Activated CD4-positive, alpha-beta memory T cell treated with anti-CD3 and anti-CD28 coated beads, Interleukin-2, amount 10 ng/mL, durations not matched to agents 7 days and 5 days (primary cell): ENCODE measurements at regions of chr16 and their contacts with region 1.

Region 1: DNA sequence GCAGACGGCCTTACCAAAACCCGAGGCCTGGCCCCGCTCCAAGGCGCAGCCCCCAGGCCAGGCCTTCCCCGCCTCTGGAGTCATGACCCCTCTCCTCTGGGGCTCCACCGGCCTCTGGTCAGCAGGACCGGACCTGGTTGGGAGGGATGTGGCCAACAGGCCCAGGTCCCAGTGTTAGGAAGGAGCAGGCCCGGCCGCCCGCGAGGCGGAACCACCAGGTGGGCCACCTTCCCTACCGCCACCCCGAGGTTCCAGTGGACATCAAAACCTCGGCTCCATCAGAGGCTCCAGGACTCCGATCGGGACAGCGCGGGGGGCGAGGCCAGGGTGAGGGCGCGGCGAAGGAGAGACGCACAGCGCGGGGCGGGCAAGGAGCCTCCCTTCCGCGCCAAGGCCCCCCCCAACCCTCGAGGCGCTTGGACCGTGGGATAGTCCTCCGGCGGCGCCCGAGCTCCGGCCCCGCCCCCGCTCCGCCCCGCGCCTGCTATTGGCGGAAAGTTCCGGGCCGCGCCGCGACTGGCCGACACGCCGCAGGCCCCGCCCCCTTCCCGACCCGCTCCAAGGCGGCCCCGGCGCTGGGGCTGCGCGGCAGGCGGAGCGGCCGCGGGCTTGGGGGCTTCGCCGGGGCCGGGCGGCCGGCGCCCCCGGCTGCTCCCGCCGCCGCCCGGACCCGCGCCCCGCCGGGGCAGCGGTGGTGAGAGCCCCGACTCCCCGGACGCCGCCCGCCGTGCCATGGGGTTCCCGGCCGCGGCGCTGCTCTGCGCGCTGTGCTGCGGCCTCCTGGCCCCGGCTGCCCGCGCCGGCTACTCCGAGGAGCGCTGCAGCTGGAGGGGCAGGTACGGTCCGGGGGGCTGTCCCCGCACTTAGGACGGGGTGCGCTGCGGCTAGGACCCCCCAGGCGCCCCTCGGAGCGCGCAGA is at the start of gene METRN:
- DNase-seq: peak; percentile 89
- H3K4me3 Mint-ChIP-seq: peak within 1 kb of the TSS; percentile 43
- H3K27ac Mint-ChIP-seq: no peak within 1 kb of the TSS
- H3K4me1 Mint-ChIP-seq: peaks cover 11% of the 10 kb centered on the region
- H3K27me3 Mint-ChIP-seq: peaks cover 17% of the 10 kb centered on the region
- total RNA-seq, gene METRN: 4.4 to 6.2 TPM

Region 2: DNA sequence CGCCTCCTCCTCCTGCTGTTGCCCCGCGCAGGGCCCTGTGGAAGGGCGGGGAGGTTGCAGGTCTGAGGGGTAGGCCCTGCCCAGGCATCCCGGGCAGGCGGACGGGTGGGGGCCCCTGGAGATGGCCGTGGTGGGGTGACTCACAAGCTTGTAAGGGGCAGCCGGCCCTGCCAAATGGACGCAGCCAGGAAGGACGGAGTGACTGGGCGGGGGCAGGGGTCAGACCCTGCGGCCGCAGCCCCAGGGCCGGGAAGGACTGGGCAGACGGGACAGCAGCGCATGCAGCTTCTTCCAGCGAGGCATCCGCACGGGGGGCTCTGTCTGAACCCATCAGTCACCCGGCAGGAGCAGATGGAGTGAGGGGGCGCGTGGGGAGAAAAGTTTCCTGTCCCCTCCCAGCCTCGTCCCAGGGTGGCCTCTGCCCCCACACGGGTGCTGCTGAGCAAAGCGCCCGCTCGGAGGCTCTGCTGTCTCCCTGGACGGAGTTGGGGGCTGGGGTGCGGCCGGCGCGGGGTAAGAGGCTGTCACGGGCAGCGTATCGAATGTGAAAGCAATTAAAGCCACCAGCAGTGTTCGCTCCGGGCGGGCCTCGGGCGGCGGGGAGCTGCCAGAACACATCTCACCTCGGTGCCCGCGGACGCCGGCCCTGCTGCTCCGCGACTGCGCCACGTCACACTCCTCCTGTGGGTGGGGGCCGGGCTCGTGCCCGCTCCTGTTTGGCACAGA is 160.0 kb before region 1 on chr16:
- CTCF ChIA-PET with region 1: no interaction called
- POLR2A ChIA-PET with region 1: no interaction called
- DNase-seq: no peak
- H3K4me3 Mint-ChIP-seq: no peak overlapping the region
- H3K27ac Mint-ChIP-seq: no peak overlapping the region
- H3K4me1 Mint-ChIP-seq: no peaks in the 10 kb centered on the region
- H3K27me3 Mint-ChIP-seq: peaks cover 6% of the 10 kb centered on the region

Region 3: GRCh38 chr16:695355-696089 is 19.3 kb before region 1 on chr16:
- CTCF ChIA-PET with region 1: interaction called, 10 read pairs
- POLR2A ChIA-PET with region 1: interaction called, 19 read pairs
- DNase-seq: peak; percentile 81
- H3K4me3 Mint-ChIP-seq: peak overlapping the region; percentile 79
- H3K27ac Mint-ChIP-seq: peak overlapping the region; percentile 92
- H3K4me1 Mint-ChIP-seq: peaks cover 57% of the 10 kb centered on the region
- H3K27me3 Mint-ChIP-seq: peaks cover 8% of the 10 kb centered on the region

Region 4: DNA sequence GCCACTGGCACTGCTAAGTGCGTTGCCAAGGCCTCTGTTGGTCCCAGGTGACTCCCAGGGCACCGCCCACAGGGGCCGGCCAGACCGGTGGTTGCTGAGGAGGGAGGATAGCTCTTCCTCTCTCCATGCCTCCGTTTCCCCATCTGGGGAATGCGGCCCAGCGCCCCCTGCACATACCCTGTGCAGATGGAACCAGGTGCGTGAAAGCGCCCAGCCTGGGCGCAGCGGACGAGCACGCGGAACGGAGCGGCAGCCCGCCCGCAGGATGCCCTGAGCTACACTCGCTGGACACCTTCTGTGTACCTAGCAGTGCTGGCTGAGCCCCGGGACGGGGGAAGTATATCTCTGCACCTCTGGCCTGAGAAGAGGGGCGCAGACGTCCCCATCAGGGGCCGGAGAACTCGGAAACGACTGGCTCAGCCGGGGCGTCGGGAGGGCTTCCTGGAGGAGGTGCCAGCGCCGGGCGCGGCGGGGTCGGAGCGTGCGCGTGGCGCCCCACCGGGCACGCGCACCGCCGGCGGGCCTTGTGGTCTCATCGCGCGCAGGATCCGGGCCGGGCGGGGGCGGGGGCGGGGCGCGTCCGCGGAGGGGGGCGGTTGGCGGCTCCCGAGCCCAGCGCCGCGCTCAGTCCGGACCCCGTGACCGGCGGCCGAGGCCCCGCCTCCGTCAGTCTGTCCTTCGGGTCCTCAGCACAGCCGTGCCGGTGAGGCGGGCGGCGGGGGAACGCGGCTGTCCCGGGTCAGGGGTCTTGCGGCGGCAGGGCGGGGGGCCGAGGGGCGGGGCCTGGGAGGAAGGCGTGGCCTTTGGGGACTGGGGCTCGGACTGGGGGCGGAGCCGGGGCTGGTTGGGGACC is 11.8 kb after region 1 on chr16 and contains the starts of genes CCDC78 and HAGHL:
- CTCF ChIA-PET with region 1: interaction called, 12 read pairs
- POLR2A ChIA-PET with region 1: interaction called, 15 read pairs
- DNase-seq: peak; percentile 65
- H3K4me3 Mint-ChIP-seq: peak within 1 kb of the TSS; percentile 56
- H3K27ac Mint-ChIP-seq: no peak within 1 kb of the TSS
- H3K4me1 Mint-ChIP-seq: peaks cover 3% of the 10 kb centered on the region
- H3K27me3 Mint-ChIP-seq: no peaks in the 10 kb centered on the region
- total RNA-seq, gene CCDC78: 1.9 to 2.3 TPM
- total RNA-seq, gene HAGHL: 8.9 to 9.1 TPM

Region 5: GRCh38 chr16:740764-741505 is 26.1 kb after region 1 on chr16 and contains the start of gene CIAO3:
- CTCF ChIA-PET with region 1: interaction called, 10 read pairs
- POLR2A ChIA-PET with region 1: interaction called, 4 read pairs
- DNase-seq: peak; percentile 94
- H3K4me3 Mint-ChIP-seq: peak within 1 kb of the TSS; percentile 77
- H3K27ac Mint-ChIP-seq: peak within 1 kb of the TSS; percentile 65
- H3K4me1 Mint-ChIP-seq: peaks cover 27% of the 10 kb centered on the region
- H3K27me3 Mint-ChIP-seq: no peaks in the 10 kb centered on the region
- total RNA-seq, gene CIAO3: 34.0 to 34.8 TPM

Region 6: DNA sequence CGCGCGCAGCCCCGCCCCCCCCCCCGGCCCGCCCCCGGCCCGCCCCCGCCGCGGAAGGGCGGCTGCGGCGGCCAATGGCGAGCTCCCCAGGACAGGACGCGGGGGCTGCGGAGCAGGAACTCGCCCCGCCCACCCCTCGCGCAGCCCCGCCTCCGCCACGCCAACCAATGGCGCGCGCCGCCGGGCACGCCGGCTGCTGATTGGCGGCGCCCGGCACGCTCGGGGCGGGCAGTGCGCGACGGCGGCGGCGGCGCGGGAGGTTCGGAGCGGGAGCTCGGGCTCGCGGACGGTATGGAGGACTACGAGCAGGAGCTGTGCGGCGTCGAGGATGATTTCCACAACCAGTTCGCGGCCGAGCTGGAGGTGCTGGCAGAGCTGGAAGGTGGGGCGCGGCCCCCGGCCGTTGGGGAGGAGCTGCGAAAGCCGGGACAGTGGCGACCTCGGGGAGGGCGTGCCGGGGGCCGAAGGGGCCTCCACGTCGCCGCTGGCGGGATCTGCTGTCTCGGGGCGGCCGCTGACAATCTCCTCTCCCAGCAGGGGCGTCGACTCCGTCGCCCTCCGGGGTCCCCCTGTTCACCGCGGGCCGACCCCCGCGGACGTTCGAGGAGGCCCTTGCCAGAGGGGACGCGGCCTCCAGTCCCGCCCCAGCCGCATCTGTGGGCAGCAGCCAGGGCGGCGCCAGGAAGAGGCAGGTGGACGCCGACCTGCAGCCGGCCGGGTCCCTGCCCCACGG is 73.7 kb after region 1 on chr16 and contains the start of gene CHTF18:
- CTCF ChIA-PET with region 1: interaction called, 23 read pairs
- POLR2A ChIA-PET with region 1: interaction called, 4 read pairs
- DNase-seq: peak; percentile 96
- H3K4me3 Mint-ChIP-seq: peak within 1 kb of the TSS; percentile 84
- H3K27ac Mint-ChIP-seq: peak within 1 kb of the TSS; percentile 65
- H3K4me1 Mint-ChIP-seq: peaks cover 18% of the 10 kb centered on the region
- H3K27me3 Mint-ChIP-seq: no peaks in the 10 kb centered on the region
- total RNA-seq, gene CHTF18: 77.6 to 80.0 TPM